ENCODE measurements at regions of chrX and their contacts with region 1.

Region 1: DNA sequence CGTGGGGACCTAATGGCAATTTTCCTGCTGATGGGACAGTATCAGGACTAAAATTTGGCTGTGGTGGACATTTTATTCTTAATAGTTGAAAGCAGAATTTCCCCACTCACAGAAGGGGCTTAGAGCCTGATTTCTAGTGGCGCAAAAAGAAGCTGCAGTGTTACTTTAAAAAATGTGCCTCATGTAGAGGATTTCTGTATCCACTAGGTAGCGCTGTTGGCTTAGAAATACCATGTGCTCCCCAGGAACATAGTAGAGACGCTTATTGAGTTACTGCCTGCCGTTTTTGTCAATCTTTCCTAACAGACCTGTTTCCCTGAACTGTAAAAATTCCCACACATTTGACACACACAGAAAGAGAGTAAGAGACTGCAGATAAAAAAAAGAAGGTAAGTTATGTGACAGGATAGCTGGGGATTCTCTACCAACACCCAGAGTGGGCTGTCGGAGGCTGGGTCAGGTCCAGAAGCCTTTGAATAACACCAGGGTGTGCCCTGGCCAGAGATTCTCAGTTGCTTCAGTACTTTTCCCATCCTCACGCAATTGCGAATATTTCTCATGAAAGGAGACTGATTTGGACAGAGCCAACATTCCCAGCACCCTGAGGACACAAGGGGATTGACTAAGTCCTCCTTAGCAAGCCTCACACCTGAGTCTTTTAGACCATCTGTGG is 88.4 kb downstream of the ZXDA start:
- DNase-seq: peak; percentile 12
- ATAC-seq: peak; percentile 86 to 96
- H3K4me3 ChIP-seq: peak overlapping the region; percentile 44 to 48 (median 45)
- H3K27ac ChIP-seq: peak overlapping the region in 3 of 4 donors; percentile 26 to 34 (median 32)
- H3K4me1 ChIP-seq: no peaks in the 10 kb centered on the region
- H3K27me3 ChIP-seq: peaks cover 0 to under 1% (median 0%) of the 10 kb centered on the region in 3 donors
- CTCF ChIP-seq: peak; percentile 65 to 74 (median 69)
- POLR2A ChIP-seq: no peak

Region 2: GRCh38 chrX:56788717-56789122 is 1033.1 kb before region 1 on chrX:
- in situ Hi-C with region 1: no loop called
- intact Hi-C with region 1: loop called (anchors 10 kb)
- DNase-seq: peak in 1 of 2 donors; percentile 27
- ATAC-seq: peak in 1 of 2 donors; percentile 83
- H3K4me3 ChIP-seq: peak overlapping the region in 3 of 4 donors; percentile 39 to 53 (median 49)
- H3K27ac ChIP-seq: peak overlapping the region in 3 of 4 donors; percentile 72 to 82 (median 73)
- H3K4me1 ChIP-seq: peaks cover 0 to 8% of the 10 kb centered on the region in 2 donors
- H3K27me3 ChIP-seq: no peaks in the 10 kb centered on the region
- CTCF ChIP-seq: peak in 4 of 5 experiments; percentile 12 to 56 (median 39)
- POLR2A ChIP-seq: no peak

Region 3: DNA sequence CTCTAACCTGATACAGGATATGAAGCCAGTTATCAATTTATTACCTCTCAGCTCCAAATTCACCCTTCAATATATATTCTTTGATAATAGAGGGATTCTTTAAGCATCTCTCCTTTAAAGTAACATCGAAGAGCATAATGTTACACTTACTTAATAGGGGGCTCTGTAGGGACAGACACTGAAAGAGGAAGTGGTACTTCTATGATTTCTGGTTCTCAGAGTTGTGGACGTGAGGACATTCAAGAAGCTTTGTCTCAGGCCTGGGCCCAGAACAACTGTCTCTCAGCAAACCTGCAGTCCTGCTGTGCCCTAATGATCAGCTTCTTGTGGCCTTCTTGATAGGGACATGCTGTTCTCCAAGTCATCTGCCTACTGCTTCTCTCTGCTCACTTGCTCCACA is 234.2 kb before region 1 on chrX:
- in situ Hi-C with region 1: loop called in 2 of 4 experiments (anchors 25 kb)
- intact Hi-C with region 1: loop called (anchors 10 kb)
- DNase-seq: no peak
- ATAC-seq: no peak
- H3K4me3 ChIP-seq: no peak overlapping the region
- H3K27ac ChIP-seq: no peak overlapping the region
- H3K4me1 ChIP-seq: peaks cover 0 to 8% of the 10 kb centered on the region in 2 donors
- H3K27me3 ChIP-seq: no peaks in the 10 kb centered on the region
- CTCF ChIP-seq: no peak
- POLR2A ChIP-seq: no peak

Region 4: DNA sequence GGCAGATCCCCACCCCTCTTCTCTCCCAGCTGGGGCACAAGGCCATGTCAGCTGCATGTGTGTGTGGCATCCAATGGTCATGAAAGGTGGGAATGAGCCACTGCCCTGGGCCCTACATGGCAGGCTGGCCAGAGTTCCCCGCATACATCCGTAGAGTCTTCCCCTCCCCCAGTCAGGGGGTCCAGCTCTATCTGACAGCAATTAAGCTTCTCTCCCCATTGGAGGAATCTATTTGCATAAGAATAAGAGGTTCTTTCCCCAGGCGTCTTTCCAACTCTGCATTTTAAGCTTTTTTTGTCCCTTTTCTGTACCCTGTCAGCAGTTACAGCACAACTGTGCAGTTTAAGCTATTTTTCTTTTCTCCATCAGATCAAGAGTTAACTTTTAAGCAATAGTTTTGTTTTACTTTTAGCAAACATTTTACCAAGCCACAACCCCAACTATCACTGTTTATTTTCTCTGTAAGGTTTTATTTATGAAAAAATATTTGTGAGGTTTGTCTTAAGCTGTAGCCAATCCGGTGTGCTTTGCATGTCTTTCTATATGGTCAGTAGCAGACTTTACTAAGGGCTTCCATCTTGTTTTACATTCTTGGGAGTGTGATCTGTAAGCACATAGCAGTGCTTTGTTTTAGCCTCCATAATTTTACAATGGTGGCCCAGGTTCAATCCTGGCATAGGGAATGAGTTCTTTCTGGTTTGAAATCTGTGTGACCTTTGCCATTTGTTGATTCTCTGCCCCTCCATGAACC is 170.5 kb before region 1 on chrX:
- in situ Hi-C with region 1: no loop called
- intact Hi-C with region 1: no loop called
- DNase-seq: no peak
- ATAC-seq: no peak
- H3K4me3 ChIP-seq: no peak overlapping the region
- H3K27ac ChIP-seq: no peak overlapping the region
- H3K4me1 ChIP-seq: no peaks in the 10 kb centered on the region
- H3K27me3 ChIP-seq: no peaks in the 10 kb centered on the region
- CTCF ChIP-seq: no peak
- POLR2A ChIP-seq: no peak

Region 5: GRCh38 chrX:57752866-57753265 is 69.0 kb before region 1 on chrX:
- in situ Hi-C with region 1: no loop called
- intact Hi-C with region 1: no loop called
- DNase-seq: no peak
- ATAC-seq: no peak
- H3K4me3 ChIP-seq: no peak overlapping the region
- H3K27ac ChIP-seq: no peak overlapping the region
- H3K4me1 ChIP-seq: no peaks in the 10 kb centered on the region
- H3K27me3 ChIP-seq: no peaks in the 10 kb centered on the region
- CTCF ChIP-seq: no peak
- POLR2A ChIP-seq: no peak

Region 6: GRCh38 chrX:57918750-57919436 is 97.1 kb after region 1 on chrX:
- in situ Hi-C with region 1: loop called in 2 of 4 experiments (anchors 10 kb)
- intact Hi-C with region 1: loop called (anchors 2 kb)
- DNase-seq: no peak
- ATAC-seq: peak in 1 of 2 donors; percentile 61
- H3K4me3 ChIP-seq: no peak overlapping the region
- H3K27ac ChIP-seq: no peak overlapping the region
- H3K4me1 ChIP-seq: peaks cover 0 to 4% of the 10 kb centered on the region in 2 donors
- H3K27me3 ChIP-seq: no peaks in the 10 kb centered on the region
- CTCF ChIP-seq: peak in 3 of 5 experiments; percentile 35 to 59 (median 36)
- POLR2A ChIP-seq: no peak

Region 7: DNA sequence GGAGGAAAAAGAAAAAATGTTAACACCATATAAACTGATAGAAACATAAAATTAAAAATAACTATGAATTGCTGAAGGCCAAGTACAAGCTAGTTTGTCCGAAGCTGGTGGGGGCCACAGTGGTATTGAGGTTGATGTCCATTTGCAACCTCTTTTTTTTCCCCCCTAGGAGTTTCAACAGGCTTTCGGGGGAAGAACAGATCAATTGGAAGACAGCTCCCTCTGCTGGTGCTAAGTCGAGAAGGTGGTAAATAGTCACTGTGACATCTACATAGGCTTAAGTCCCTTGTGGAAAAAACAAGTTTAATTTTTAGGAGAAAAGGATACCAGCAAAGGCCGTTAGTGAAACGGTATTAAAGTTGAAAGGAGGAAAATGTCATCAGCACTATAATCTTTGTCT is 204.1 kb after region 1 on chrX:
- in situ Hi-C with region 1: loop called in 1 of 4 experiments (anchors 10 kb)
- intact Hi-C with region 1: loop called (anchors 2 kb)
- DNase-seq: no peak
- ATAC-seq: no peak
- H3K4me3 ChIP-seq: no peak overlapping the region
- H3K27ac ChIP-seq: no peak overlapping the region
- H3K4me1 ChIP-seq: no peaks in the 10 kb centered on the region
- H3K27me3 ChIP-seq: no peaks in the 10 kb centered on the region
- CTCF ChIP-seq: peak; percentile 16 to 63 (median 39)
- POLR2A ChIP-seq: no peak

Measured in gastrocnemius medialis (tissue), 4 donors.